ENCODE measurements at regions of chrX and their contacts with region 1.

Region 1: GRCh38 chrX:31036895-31037294 is 34.9 kb downstream of the FTHL17 start:
- DNase-seq: peak in 36 of 42 donors; percentile 1 to 61 (median 28)

Region 2: GRCh38 chrX:31279359-31279758 is 242.5 kb after region 1 on chrX:
- intact Hi-C with region 1: no loop called
- DNase-seq: no peak

Region 3: DNA sequence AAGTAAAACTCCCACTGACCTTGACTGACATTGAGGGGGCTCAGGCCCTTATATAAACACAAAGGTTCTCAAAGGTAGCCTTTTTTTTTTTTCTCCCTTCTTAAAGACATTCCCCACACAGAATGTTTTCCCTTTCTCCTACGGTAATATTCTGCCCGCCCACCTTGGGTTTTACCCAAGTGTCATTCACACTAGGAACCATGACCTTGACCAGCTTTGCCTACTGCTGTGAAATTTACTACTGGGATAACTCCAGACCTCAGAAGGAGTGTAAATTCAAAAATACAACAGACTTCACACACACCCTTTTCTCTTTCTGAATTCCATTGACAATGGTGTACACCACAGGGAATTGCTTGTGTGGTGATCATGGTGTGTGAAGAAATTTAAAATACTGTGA is 624.4 kb after region 1 on chrX:
- intact Hi-C with region 1: loop called (anchors 10 kb)
- DNase-seq: no peak